ENCODE measurements at regions of chr1 and their contacts with region 1.

Region 1: DNA sequence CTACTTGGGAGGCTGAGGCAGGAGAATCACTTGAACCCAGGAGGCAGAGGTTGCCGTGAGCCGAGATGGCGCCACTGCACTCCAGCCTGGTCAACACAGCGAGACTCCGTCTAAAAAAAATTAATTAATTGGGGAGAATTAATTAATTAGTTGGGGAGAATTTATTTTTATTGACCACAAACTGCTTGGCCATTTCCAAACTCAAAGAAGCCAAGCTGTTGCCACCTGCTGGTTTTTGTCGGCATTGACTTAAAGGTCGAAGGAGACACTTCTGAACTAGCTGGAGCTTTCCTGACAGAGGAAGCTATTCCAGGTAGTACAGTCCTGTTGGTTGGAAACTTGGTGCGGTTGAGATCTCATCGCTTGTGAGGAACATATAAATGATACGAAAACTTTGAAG is 13.1 kb downstream of the MAP1LC3C start:
- DNase-seq: peak; percentile 80
- H3K4me3 Mint-ChIP-seq: no peak overlapping the region
- H3K27ac Mint-ChIP-seq: no peak overlapping the region
- H3K4me1 Mint-ChIP-seq: peaks cover 25% of the 10 kb centered on the region
- H3K27me3 Mint-ChIP-seq: no peaks in the 10 kb centered on the region
- CTCF ChIP-seq: peak; percentile 56

Region 2: GRCh38 chr1:241592273-241592958 is 393.4 kb before region 1 on chr1:
- CTCF ChIA-PET with region 1: no interaction called
- POLR2A ChIA-PET with region 1: no interaction called
- intact Hi-C with region 1: loop called (anchors 5 kb)
- DNase-seq: peak; percentile 98
- H3K4me3 Mint-ChIP-seq: peak overlapping the region; percentile 7
- H3K27ac Mint-ChIP-seq: peak overlapping the region; percentile 76
- H3K4me1 Mint-ChIP-seq: peaks cover 39% of the 10 kb centered on the region
- H3K27me3 Mint-ChIP-seq: no peaks in the 10 kb centered on the region
- CTCF ChIP-seq: no peak

Region 3: GRCh38 chr1:241847796-241848685 is 137.7 kb before region 1 on chr1 and contains the start of gene EXO1:
- CTCF ChIA-PET with region 1: interaction called, 11 read pairs
- POLR2A ChIA-PET with region 1: no interaction called
- intact Hi-C with region 1: loop called (anchors 5 kb)
- DNase-seq: peak; percentile 98
- H3K4me3 Mint-ChIP-seq: peak within 1 kb of the TSS; percentile 95
- H3K27ac Mint-ChIP-seq: peak within 1 kb of the TSS; percentile 81
- H3K4me1 Mint-ChIP-seq: peaks cover 18% of the 10 kb centered on the region
- H3K27me3 Mint-ChIP-seq: no peaks in the 10 kb centered on the region
- CTCF ChIP-seq: peak; percentile 38
- total RNA-seq, gene EXO1: 7.3 and 17.5 TPM in 2 replicates

Region 4: DNA sequence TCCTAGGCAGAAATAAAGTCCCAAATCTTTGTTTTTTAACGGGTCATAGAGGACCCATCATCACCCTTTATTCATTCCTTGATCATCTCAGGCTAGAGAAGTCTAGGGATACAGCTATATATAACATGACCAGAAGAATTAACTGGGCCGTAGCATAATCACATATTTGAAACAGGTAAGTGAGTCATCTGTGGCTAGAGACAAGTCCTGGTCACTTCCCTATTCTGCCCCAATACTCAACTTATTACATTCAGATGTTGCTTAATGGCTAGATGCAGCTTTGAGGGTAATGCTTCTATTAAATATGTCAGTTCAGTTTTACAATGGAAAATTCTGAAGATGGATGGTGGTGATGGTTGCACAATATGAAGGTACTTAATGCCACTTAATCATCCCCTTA is 90.8 kb before region 1 on chr1:
- CTCF ChIA-PET with region 1: interaction called, 92 read pairs
- POLR2A ChIA-PET with region 1: interaction called, 5 read pairs
- intact Hi-C with region 1: loop called (anchors 1 kb)
- DNase-seq: no peak
- H3K4me3 Mint-ChIP-seq: no peak overlapping the region
- H3K27ac Mint-ChIP-seq: no peak overlapping the region
- H3K4me1 Mint-ChIP-seq: no peaks in the 10 kb centered on the region
- H3K27me3 Mint-ChIP-seq: no peaks in the 10 kb centered on the region
- CTCF ChIP-seq: no peak

Region 5: GRCh38 chr1:241902391-241903065 is 83.3 kb before region 1 on chr1:
- CTCF ChIA-PET with region 1: interaction called, 92 read pairs
- POLR2A ChIA-PET with region 1: interaction called, 5 read pairs
- intact Hi-C with region 1: no loop called
- DNase-seq: no peak
- H3K4me3 Mint-ChIP-seq: no peak overlapping the region
- H3K27ac Mint-ChIP-seq: no peak overlapping the region
- H3K4me1 Mint-ChIP-seq: no peaks in the 10 kb centered on the region
- H3K27me3 Mint-ChIP-seq: no peaks in the 10 kb centered on the region
- CTCF ChIP-seq: no peak

Region 6: GRCh38 chr1:241998412-241998921 is 12.7 kb after region 1 on chr1:
- CTCF ChIA-PET with region 1: interaction called, 64 read pairs
- POLR2A ChIA-PET with region 1: no interaction called
- intact Hi-C with region 1: no loop called
- DNase-seq: peak; percentile 93
- H3K4me3 Mint-ChIP-seq: peak overlapping the region; percentile 62
- H3K27ac Mint-ChIP-seq: no peak overlapping the region
- H3K4me1 Mint-ChIP-seq: peaks cover 7% of the 10 kb centered on the region
- H3K27me3 Mint-ChIP-seq: no peaks in the 10 kb centered on the region
- CTCF ChIP-seq: peak; percentile 89

Region 7: DNA sequence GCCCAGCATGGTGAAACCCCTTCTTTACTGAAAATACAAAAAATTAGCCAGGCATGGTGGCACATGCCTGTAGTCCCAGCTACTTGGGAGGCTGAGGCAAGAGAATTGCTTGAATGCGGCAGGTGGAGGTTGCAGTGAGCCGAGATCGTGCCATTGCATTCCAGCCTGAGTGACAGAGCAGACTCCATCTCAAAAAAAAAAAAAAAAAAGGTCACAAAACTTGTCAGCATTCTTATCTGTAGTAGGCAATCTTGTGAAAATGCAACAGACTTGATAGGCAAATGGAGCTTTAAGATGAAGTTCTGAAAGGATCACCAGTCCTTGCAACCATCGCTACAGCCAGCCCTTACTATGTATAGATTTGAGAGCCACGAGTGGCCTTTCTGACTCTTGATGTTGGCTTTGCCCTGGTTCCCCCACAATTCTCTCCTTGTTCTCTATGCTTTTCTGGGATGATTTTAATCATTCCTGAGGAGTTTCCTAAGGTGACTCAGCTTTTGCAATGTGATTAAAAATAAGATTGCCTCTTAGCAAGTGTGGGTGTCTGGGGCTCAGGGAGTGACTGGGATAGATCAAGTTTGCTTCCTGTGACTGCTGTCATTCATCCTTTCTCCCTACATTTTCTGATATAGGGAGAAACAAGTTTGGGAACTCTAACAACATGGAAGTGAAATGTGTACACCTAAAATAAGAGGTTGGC is 20.2 kb after region 1 on chr1:
- CTCF ChIA-PET with region 1: interaction called, 64 read pairs
- POLR2A ChIA-PET with region 1: interaction called, 3 read pairs
- intact Hi-C with region 1: no loop called
- DNase-seq: no peak
- H3K4me3 Mint-ChIP-seq: no peak overlapping the region
- H3K27ac Mint-ChIP-seq: no peak overlapping the region
- H3K4me1 Mint-ChIP-seq: no peaks in the 10 kb centered on the region
- H3K27me3 Mint-ChIP-seq: no peaks in the 10 kb centered on the region
- CTCF ChIP-seq: no peak

Region 8: GRCh38 chr1:242055744-242056320 is 70.0 kb after region 1 on chr1:
- CTCF ChIA-PET with region 1: no interaction called
- POLR2A ChIA-PET with region 1: no interaction called
- intact Hi-C with region 1: no loop called
- DNase-seq: peak; percentile 22
- H3K4me3 Mint-ChIP-seq: no peak overlapping the region
- H3K27ac Mint-ChIP-seq: no peak overlapping the region
- H3K4me1 Mint-ChIP-seq: no peaks in the 10 kb centered on the region
- H3K27me3 Mint-ChIP-seq: no peaks in the 10 kb centered on the region
- CTCF ChIP-seq: no peak